ENCODE measurements at regions of chr11 and their contacts with region 1.

Region 1: GRCh38 chr11:4187055-4187988 is 92.7 kb downstream of the RRM1 start:
- DNase-seq: peak; percentile 89
- H3K4me3 ChIP-seq: peak overlapping the region; percentile 78
- H3K27ac ChIP-seq: no peak overlapping the region
- H3K4me1 ChIP-seq: no peaks in the 10 kb centered on the region
- H3K27me3 ChIP-seq: no peaks in the 10 kb centered on the region
- CTCF ChIP-seq: peak; percentile 92

Region 2: GRCh38 chr11:4368286-4368685 is 181.0 kb after region 1 on chr11 and contains the start of gene OR52B4:
- intact Hi-C with region 1: no loop called
- DNase-seq: no peak
- H3K4me3 ChIP-seq: no peak within 1 kb of the TSS
- H3K27ac ChIP-seq: no peak within 1 kb of the TSS
- H3K4me1 ChIP-seq: no peaks in the 10 kb centered on the region
- H3K27me3 ChIP-seq: no peaks in the 10 kb centered on the region
- CTCF ChIP-seq: no peak
- total RNA-seq, gene OR52B4: not detected

Region 3: DNA sequence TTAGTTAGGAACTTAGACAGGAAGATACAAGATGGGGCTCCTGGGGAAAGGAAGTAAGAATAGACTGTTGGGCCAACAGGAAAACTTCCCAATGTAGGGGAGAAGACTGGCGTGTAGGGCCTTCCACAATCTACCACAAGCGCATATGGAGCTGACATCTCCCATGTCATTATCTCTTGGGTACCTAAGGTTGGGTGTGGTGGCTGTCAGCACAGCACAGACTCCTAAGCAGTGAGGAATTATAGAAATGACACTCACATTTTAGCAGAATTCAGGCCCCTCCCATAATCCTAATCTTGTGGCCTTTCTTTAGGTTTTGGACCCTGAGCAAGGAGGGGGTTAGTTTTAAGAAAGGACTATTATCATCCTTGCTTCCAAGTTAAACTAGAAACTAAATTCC is 194.6 kb after region 1 on chr11:
- intact Hi-C with region 1: loop called (anchors 10 kb)
- DNase-seq: no peak
- H3K4me3 ChIP-seq: no peak overlapping the region
- H3K27ac ChIP-seq: no peak overlapping the region
- H3K4me1 ChIP-seq: no peaks in the 10 kb centered on the region
- H3K27me3 ChIP-seq: no peaks in the 10 kb centered on the region
- CTCF ChIP-seq: no peak

Region 4: GRCh38 chr11:4418403-4418802 is 231.1 kb after region 1 on chr11:
- intact Hi-C with region 1: no loop called
- DNase-seq: no peak
- H3K4me3 ChIP-seq: no peak overlapping the region
- H3K27ac ChIP-seq: no peak overlapping the region
- H3K4me1 ChIP-seq: no peaks in the 10 kb centered on the region
- H3K27me3 ChIP-seq: no peaks in the 10 kb centered on the region
- CTCF ChIP-seq: no peak

Region 5: GRCh38 chr11:4496557-4497275 is 309.4 kb after region 1 on chr11:
- intact Hi-C with region 1: loop called (anchors 2 kb)
- DNase-seq: no peak
- H3K4me3 ChIP-seq: no peak overlapping the region
- H3K27ac ChIP-seq: no peak overlapping the region
- H3K4me1 ChIP-seq: no peaks in the 10 kb centered on the region
- H3K27me3 ChIP-seq: no peaks in the 10 kb centered on the region
- CTCF ChIP-seq: no peak

Region 6: GRCh38 chr11:4539603-4540219 is 352.4 kb after region 1 on chr11:
- intact Hi-C with region 1: loop called (anchors 5 kb)
- DNase-seq: peak; percentile 57
- H3K4me3 ChIP-seq: no peak overlapping the region
- H3K27ac ChIP-seq: no peak overlapping the region
- H3K4me1 ChIP-seq: no peaks in the 10 kb centered on the region
- H3K27me3 ChIP-seq: no peaks in the 10 kb centered on the region
- CTCF ChIP-seq: peak; percentile 75